Activated naive CD8-positive, alpha-beta T cell treated with anti-CD3 and anti-CD28 coated beads, Interleukin-2, amount 10 ng/mL, durations not matched to agents 7 days and 5 days (primary cell): ENCODE measurements at regions of chr1 and their contacts with region 1.

Region 1: DNA sequence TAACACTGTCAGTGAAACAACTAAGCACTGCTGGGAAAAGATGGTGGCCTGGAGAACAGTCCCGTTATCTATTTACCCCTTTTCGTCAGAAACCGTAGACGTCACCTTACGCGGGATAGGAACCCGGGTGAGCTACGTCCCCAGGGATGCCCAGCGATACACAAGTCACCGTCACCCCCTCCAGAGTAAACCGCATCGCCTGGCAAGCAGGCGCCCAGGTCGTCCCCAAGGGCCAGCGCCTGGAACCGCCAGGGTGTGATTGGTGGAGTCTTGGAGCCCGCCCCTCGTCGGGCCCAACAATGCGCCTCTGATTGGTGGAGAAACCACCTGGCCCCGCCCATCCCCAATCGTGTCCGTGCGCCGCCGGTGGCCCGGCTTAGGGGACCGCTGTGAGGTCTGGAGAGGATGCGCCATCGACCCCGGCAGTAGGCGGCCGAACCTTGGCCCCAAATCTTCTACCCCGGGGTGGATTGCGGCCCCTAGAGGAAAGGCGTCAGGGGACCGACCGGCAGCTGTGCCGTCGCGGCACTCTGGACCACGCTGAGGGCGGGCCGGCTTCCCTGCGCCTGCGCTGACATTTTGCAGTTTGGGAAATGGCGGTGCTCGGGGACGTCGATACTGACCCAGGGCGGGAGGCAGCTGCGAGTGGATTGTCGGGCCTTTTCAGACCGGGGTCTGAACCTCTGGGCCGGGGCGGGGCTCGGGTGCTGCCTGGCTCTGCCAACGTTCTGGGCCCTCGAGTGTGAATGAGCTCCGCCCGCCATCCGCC is 34.4 kb downstream of the SLC2A1 start:
- DNase-seq: peak; percentile 93
- ATAC-seq: peak; percentile 91
- H3K4me3 Mint-ChIP-seq: peak overlapping the region; percentile 83
- H3K27ac Mint-ChIP-seq: peak overlapping the region; percentile 87
- H3K4me1 Mint-ChIP-seq: peaks cover 40% of the 10 kb centered on the region
- H3K27me3 Mint-ChIP-seq: no peaks in the 10 kb centered on the region

Region 2: GRCh38 chr1:42852613-42852990 is 71.7 kb before region 1 on chr1:
- POLR2A ChIA-PET with region 1: no interaction called
- DNase-seq: no peak
- ATAC-seq: no peak
- H3K4me3 Mint-ChIP-seq: no peak overlapping the region
- H3K27ac Mint-ChIP-seq: no peak overlapping the region
- H3K4me1 Mint-ChIP-seq: peaks cover 16% of the 10 kb centered on the region
- H3K27me3 Mint-ChIP-seq: no peaks in the 10 kb centered on the region

Region 3: GRCh38 chr1:42936309-42937078 is 12.2 kb after region 1 on chr1:
- POLR2A ChIA-PET with region 1: interaction called, 11 read pairs
- DNase-seq: peak; percentile 30
- ATAC-seq: no peak
- H3K4me3 Mint-ChIP-seq: peak overlapping the region; percentile 6
- H3K27ac Mint-ChIP-seq: peak overlapping the region; percentile 80
- H3K4me1 Mint-ChIP-seq: peaks cover 87% of the 10 kb centered on the region
- H3K27me3 Mint-ChIP-seq: no peaks in the 10 kb centered on the region

Region 4: GRCh38 chr1:42952303-42953001 is 28.2 kb after region 1 on chr1:
- POLR2A ChIA-PET with region 1: interaction called, 19 read pairs
- DNase-seq: no peak
- ATAC-seq: peak; percentile 67
- H3K4me3 Mint-ChIP-seq: peak overlapping the region; percentile 78
- H3K27ac Mint-ChIP-seq: peak overlapping the region; percentile 85
- H3K4me1 Mint-ChIP-seq: peaks cover 72% of the 10 kb centered on the region
- H3K27me3 Mint-ChIP-seq: no peaks in the 10 kb centered on the region

Region 5: DNA sequence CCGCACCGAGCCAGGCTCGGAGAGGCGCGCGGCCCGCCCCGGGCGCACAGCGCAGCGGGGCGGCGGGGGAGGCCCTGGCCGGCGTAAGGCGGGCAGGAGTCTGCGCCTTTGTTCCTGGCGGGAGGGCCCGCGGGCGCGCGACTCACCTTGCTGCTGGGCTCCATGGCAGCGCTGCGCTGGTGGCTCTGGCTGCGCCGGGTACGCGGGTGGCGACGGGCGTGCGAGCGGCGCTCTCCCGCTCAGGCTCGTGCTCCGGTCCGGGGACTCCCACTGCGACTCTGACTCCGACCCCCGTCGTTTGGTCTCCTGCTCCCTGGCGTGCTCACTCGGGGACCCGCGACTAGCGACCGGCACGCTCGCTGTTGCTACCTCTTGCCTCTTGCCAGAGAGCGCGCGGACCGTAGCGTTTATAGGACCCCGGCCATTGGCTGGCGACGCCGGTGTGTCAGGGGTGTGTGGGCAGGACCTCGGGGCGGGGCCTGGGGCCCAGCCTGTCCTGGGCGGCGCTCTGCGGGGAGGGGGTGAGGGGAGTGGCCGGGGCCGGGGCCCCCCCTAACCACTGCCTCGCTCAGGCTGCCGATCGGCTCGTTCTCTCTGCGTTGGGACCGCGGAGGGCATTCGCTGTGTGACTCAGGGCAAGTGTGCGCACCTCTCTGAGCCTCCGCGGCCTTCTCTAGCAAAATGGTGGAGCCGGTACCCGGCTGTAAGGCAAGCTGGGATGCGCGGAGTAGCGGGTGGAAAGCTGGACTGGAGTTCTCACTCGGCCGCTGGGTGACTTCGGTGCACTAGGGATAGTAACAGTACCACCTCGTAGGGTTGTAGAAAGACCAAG is 34.4 kb after region 1 on chr1 and contains the start of gene SLC2A1:
- POLR2A ChIA-PET with region 1: interaction called, 19 read pairs
- DNase-seq: peak; percentile 94
- ATAC-seq: peak; percentile 87
- H3K4me3 Mint-ChIP-seq: peak within 1 kb of the TSS; percentile 97
- H3K27ac Mint-ChIP-seq: peak within 1 kb of the TSS; percentile 96
- H3K4me1 Mint-ChIP-seq: peaks cover 40% of the 10 kb centered on the region
- H3K27me3 Mint-ChIP-seq: no peaks in the 10 kb centered on the region
- total RNA-seq, gene SLC2A1: 80.8 to 82.3 TPM

Region 6: DNA sequence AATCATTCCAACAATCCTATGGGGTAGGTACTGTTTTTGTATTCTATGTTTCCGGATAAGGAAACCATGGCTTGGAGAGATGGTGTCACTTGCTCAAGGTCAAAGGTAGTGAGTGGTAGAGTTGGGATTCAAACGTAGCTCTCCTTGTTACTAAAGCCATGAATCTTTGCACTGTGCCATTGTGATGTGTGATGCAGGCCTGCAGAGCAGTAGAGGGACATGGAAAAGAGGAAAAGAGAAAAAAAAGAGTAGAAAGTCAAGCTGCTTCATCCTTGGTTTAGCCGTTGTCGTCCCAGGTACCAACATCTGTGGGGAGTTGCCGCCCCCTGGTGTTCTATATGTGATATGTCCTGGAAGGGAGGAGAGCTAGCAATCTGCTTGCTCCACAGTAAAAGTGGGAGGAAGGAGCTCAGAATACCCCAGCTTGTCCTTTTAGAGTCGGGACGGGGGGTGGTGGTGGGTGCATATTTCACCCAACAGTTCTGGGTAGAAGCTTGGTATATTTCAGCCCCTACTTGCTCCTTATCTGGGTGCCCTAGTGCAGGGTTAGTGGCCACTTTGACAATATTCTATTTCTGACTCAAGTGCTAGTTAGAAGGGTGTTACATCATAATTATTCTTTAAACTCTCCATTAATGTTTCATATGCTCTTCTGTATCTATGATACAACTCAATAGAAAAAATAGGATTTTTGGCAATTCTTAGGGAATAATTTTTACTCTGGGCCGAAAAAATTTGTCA is 149.4 kb after region 1 on chr1:
- POLR2A ChIA-PET with region 1: interaction called, 17 read pairs
- DNase-seq: peak; percentile 68
- ATAC-seq: peak; percentile 72
- H3K4me3 Mint-ChIP-seq: no peak overlapping the region
- H3K27ac Mint-ChIP-seq: peak overlapping the region; percentile 71
- H3K4me1 Mint-ChIP-seq: peaks cover 4% of the 10 kb centered on the region
- H3K27me3 Mint-ChIP-seq: peaks cover 6% of the 10 kb centered on the region